Tibial artery (tissue), 4 donors: ENCODE measurements at regions of chr1 and their contacts with region 1.

Region 1: DNA sequence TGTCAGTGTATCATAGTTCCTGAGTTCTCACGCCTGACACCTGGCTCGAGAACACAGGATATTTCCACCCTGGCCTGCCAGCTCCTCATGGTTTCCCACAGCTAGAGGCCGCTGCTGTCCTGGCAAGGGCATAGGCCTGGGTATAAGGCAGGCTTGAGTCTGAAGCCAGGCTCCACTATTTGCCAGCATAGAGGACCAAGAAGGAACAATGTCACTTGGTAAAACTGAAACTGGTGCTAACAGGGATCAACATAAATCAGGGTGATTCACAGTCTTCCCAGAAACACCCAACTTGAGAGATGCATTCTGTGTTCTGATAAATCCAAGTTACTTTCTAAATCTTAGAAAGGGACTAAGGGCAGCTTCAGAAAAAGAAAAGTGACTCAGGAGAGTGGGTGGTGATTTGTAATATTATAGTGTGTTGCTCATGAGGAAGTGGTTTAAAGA is 6.9 kb upstream of the S100A2 start:
- DNase-seq: peak; percentile 90 to 93
- H3K4me3 ChIP-seq: no peak overlapping the region
- H3K27ac ChIP-seq: peak overlapping the region; percentile 54 to 65
- H3K4me1 ChIP-seq: peaks cover 5 to 36% (median 28%) of the 10 kb centered on the region in 4 donors
- H3K27me3 ChIP-seq: no peaks in the 10 kb centered on the region
- CTCF ChIP-seq: peak; percentile 78 to 90

Region 2: DNA sequence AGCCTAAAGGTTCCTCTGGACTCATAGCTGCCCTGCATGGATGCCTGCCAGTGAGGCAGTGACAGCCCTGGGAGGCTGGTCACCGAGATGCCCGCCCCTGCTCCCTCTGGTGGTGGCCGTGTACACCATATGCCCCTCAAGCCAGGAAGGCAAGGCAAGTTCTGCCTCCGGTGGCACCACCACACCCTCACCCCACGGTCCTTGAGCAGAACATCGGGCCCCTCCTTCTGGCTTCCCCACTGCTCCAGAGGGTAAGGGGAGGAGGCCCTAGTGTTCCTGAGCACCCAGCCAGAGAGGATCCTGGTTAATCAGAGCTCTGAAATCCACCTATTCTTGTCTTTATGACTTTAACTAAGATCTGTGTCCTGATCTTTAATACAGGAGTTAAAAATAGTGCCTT is 45.1 kb after region 1 on chr1:
- intact Hi-C with region 1: loop called (anchors 2 kb)
- DNase-seq: peak in 1 of 2 donors; percentile 88
- H3K4me3 ChIP-seq: no peak overlapping the region
- H3K27ac ChIP-seq: peak overlapping the region in 1 of 2 donors; percentile 37
- H3K4me1 ChIP-seq: peaks cover 0 to 17% (median 11%) of the 10 kb centered on the region in 4 donors
- H3K27me3 ChIP-seq: no peaks in the 10 kb centered on the region
- CTCF ChIP-seq: no peak

Region 3: GRCh38 chr1:153670859-153671627 is 98.5 kb after region 1 on chr1 and contains the start of gene ILF2:
- intact Hi-C with region 1: loop called (anchors 5 kb)
- DNase-seq: peak; percentile 95 to 99
- H3K4me3 ChIP-seq: peak within 1 kb of the TSS; percentile 73 to 78
- H3K27ac ChIP-seq: peak within 1 kb of the TSS; percentile 84 to 87
- H3K4me1 ChIP-seq: peaks cover 0 to 23% (median 17%) of the 10 kb centered on the region in 4 donors
- H3K27me3 ChIP-seq: no peaks in the 10 kb centered on the region
- CTCF ChIP-seq: peak in 1 of 2 experiments; percentile 37